AG04450 (cell line): ENCODE measurements at regions of chr2 and their contacts with region 1.

Region 1: DNA sequence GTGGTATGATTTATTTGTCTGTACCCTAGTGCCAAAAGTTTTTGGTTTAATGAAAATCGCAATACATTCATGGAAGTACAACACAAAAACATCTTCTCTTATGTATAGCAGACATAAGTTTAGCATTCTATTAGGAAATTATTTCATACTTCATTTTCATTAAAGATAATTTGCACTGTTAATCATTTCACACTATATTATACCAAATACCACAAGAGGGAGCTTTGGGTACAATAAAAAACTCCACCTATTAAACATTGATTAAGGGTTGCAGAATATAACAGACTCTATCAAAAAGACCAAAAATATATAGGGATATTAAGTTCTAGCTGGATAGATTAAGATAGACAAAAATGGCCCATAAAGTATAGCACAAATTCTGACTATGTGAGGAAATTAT is 79.0 kb downstream of the SLC66A3 start:
- DNase-seq: no peak
- H3K4me3 ChIP-seq: no peak overlapping the region
- H3K27ac ChIP-seq: no peak overlapping the region
- H3K27me3 ChIP-seq: no peaks in the 10 kb centered on the region
- CTCF ChIP-seq: peak; percentile 51

Region 2: DNA sequence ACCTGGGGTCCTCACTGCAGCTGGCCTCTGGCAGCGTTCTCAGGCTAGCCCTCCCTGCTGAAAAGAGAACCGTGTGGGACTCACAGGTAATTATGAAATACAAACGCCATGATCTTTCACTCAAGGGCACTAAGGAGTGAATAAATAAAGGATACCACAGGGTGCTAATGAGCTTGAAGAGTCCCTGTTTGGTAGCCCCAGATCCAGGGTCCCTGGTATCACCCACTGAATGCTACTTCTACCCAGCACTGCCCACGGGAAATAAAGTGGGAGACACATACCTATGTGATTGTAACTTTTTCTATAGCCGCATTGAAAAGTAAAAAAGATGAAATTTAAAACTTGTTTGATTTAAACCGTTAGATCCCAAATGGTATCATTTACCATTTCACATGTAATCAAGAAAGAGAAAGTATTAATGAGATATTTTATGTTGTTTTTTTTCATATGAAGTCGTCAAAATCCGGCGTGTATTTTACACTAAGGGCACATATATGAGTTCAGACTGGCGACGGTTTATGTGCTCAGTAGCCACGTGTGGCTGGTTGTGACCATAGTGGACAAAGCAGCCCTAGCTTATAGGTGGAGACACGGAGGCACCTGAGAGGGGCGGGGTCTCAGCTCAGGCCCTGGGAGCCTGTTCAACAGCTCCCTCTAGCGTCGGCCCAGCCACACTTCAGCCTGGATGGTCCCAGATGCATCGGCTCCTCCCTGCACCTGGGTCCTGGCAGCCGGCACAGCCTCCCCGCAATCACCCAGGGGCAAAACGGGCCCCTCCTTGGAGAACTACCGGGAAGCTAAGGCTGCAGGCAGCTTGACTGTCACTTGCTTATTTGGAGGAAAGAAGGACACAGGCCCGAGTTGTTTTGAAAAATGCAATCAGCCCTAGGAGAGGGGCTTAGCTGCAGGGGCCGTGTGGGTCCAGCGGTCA is 825.4 kb before region 1 on chr2:
- CTCF ChIA-PET with region 1: no interaction called
- POLR2A ChIA-PET with region 1: no interaction called
- DNase-seq: no peak
- H3K4me3 ChIP-seq: peak overlapping the region; percentile 17; the same call in 1 of the 2 replicates
- H3K27ac ChIP-seq: peak overlapping the region; percentile 21
- H3K27me3 ChIP-seq: no peaks in the 10 kb centered on the region
- CTCF ChIP-seq: peak; percentile 95

Region 3: DNA sequence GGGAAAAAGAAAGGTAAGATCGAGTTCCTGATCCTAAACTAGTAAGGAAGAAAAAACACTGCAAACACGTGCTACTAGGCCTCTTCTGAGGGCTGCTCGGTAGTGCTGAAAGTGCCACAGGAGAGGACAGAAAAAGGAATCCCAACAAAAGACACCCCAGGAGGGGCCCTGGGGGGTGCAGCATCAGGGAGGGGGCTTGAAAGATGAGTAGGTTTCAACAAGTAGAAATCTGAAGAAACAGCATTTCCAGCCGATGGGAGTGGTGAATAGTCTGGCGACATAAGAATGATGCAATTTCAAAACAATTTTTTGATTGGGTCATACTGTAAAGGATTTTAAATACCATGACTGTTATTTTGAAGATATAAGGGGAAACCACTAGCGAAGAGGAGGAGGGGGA is 643.1 kb before region 1 on chr2:
- CTCF ChIA-PET with region 1: no interaction called
- POLR2A ChIA-PET with region 1: no interaction called
- DNase-seq: no peak
- H3K4me3 ChIP-seq: no peak overlapping the region
- H3K27ac ChIP-seq: no peak overlapping the region
- H3K27me3 ChIP-seq: no peaks in the 10 kb centered on the region
- CTCF ChIP-seq: no peak

Region 4: GRCh38 chr2:11187083-11187619 is 47.2 kb before region 1 on chr2:
- CTCF ChIA-PET with region 1: no interaction called
- POLR2A ChIA-PET with region 1: no interaction called
- DNase-seq: peak; percentile 27
- H3K4me3 ChIP-seq: no peak overlapping the region
- H3K27ac ChIP-seq: no peak overlapping the region
- H3K27me3 ChIP-seq: no peaks in the 10 kb centered on the region
- CTCF ChIP-seq: no peak

Region 5: DNA sequence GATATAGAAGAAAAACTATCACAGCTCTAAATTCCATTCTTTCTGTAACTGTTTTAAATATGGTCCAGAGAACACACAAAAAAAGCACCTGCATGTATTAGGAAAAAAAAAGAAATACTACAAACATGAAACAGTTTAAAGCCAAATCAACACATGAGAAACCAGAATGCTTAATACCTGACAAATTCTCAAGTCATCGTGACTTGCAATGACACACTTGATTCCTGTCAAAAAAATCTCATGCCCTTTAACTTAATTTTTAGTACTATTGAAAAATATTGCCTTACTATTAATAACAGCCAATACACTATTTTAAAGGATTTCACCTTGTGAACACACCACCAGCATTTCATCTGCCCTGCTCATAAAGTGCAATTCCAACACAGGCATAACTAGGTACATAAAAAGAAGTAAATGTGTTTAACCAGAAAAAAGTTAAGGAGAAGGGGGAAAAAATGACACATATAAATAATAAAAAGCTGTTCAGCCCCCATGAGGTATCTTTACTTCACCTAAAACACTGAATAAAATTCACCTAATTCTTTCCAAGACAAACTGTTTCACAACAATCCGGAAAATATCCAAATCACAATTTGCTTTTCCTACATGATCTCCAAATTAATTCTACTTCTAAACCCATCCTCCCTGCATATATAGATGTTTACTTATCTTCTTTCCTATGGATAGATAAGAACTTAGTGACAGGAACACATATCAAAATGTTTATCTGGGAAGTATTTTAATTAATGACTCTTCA is 99.3 kb after region 1 on chr2:
- CTCF ChIA-PET with region 1: no interaction called
- POLR2A ChIA-PET with region 1: interaction called, 11 read pairs
- DNase-seq: no peak
- H3K4me3 ChIP-seq: no peak overlapping the region
- H3K27ac ChIP-seq: no peak overlapping the region
- H3K27me3 ChIP-seq: no peaks in the 10 kb centered on the region
- CTCF ChIP-seq: no peak